HEK293 (cell line): ENCODE measurements at regions of chr9 and their contacts with region 1.

Region 1: DNA sequence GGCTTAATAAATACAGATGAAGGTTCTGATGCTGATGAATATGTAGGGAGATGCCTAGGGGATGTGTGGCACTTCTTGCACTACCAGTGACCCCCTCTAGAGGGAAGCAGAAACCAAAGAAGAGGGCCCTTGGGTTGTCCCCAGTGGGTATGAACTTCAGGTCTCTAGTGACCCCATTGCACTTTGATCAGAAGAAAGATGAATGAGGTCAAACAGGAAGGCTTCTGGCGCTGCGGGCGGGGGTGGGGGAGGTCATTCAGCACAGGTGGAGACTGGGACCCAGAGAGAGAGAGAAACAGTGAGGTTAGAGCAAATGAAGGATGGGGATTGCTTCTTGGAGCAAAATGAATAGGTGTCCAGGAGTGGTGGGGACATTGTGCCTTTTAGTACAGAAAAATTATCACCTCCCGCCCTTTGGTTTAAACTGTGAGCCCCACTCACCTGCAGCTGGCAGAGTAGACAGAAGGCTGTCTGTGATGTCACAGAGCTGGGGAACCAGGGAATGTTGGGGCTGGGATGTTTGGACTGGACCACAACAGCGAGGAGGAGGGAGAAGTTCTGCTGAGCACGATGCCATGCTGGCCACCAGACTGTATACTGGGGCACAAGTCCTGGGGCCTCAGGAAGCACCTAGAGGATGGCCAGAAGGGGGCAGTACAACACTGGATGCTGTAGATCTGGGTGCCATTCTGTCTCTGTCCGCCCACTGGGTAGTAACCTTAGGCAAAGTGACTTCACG is at the start of gene TEX48:
- H3K4me3 ChIP-seq: no peak within 1 kb of the TSS
- H3K27ac ChIP-seq: no peak within 1 kb of the TSS
- H3K4me1 ChIP-seq: peaks cover 3% of the 10 kb centered on the region
- CTCF ChIP-seq: no peak; the same call in 1 of the 2 replicates

Region 2: DNA sequence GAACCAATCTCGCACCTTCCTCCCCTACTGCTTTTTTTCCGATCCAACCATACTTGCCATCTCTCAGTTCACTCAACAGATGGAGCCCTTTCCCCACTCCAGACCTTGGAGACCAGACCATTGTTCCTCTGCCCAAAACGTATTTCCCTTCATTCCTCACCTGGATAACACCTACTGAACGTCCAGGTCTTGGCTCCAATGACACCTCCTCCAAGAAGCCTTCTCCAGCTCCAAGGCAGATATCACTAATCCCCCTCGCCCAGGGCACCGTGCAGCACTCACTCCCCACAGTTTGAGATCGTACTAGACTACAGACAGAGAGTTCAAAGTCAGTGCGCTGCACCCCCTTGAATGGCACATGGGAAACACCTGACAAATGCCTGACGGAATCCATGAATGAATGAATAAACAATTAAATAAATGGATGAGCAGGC is 246.9 kb before region 1 on chr9:
- CTCF ChIA-PET with region 1: interaction called, 10 read pairs
- POLR2A ChIA-PET with region 1: no interaction called
- H3K4me3 ChIP-seq: no peak overlapping the region
- H3K27ac ChIP-seq: no peak overlapping the region
- H3K4me1 ChIP-seq: no peaks in the 10 kb centered on the region
- CTCF ChIP-seq: peak; percentile 86

Region 3: DNA sequence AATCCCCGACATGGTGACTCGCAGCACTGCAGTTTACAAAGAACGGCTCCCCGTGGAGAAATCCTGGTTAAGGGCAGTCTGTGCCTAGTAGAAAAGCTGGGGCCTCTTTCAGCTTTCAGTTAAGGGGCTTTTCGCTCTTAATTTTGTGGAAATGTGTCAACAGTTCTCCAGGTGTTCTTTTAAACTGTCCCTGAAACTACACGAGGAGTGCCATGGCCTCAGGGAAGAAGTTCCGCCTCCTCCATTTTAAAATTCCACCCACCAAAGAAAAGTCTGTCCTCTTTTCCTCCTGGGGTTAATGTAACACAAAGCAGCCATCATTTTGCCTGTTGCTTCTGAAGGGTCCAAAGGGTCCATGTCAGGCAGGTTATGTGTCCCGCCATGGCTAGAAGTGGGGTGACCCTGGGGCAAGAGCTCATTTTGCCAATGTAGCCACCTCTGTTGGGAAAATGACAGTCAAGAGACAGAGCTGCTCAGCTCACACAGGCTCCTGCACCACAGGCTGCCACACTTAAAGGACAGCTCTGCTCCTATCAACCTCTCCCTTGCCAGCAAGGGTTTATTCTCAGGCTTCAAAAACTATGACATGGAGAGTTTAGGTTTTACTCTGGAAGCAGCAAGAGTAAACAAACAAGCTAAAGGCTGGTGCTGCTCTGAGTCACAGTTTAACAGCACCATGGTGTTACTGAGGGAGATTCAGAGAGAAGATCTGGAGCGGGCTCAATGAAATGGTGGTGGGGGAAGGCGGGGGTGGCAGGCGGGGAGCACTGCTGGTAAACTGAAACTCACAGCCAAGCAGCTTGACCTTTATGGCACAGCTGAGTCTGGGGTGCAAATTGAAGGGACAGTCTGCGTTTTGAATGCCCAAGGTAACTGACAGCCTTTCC is 179.7 kb before region 1 on chr9:
- CTCF ChIA-PET with region 1: no interaction called
- POLR2A ChIA-PET with region 1: no interaction called
- H3K4me3 ChIP-seq: no peak overlapping the region; the same call in 1 of the 2 replicates
- H3K27ac ChIP-seq: peak overlapping the region; percentile 74
- H3K4me1 ChIP-seq: peaks cover 10% of the 10 kb centered on the region
- CTCF ChIP-seq: no peak

Region 4: DNA sequence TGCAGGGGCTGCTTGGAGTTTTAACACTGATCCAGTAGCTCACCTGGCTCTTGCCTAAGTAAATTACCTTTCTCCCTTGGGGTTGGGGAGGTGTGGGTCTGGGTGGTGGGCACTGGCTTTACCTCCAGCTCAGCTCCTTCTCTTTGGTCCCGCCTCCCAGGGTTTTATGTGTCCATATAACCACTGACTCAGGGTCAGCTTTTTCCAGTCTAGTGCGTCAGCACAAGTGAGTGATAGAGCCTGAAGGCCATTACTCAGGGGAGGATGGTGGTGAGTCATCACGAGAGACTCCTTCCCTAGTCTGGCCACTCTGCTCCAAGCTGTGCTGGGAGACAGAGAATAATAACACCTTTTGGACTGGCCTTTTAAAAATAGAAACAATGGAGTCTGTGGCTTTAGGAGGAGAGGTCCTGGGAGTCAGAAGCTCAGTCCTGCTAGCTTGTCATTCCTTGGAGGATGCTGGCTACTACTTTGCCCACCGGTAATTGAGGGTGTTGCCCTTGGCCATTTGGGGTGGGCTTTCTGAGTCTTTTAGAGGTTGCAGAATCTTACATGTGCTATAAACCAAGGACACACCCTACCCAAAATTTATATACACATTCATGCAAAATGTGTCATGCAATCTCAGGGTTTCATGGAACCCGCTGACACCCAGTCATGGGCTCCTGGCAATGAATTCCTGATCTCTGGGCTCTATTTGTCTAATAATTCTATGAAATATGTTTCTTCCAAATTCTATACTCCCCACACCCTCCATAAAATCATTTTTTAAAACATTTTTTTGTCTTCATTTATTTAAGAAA is 129.7 kb before region 1 on chr9:
- CTCF ChIA-PET with region 1: no interaction called
- POLR2A ChIA-PET with region 1: no interaction called
- H3K4me3 ChIP-seq: no peak overlapping the region
- H3K27ac ChIP-seq: no peak overlapping the region
- H3K4me1 ChIP-seq: no peaks in the 10 kb centered on the region
- CTCF ChIP-seq: no peak

Region 5: GRCh38 chr9:114706711-114707110 is 24.9 kb after region 1 on chr9:
- CTCF ChIA-PET with region 1: interaction called, 16 read pairs
- POLR2A ChIA-PET with region 1: no interaction called
- H3K4me3 ChIP-seq: no peak overlapping the region
- H3K27ac ChIP-seq: no peak overlapping the region
- H3K4me1 ChIP-seq: no peaks in the 10 kb centered on the region
- CTCF ChIP-seq: no peak

Region 6: GRCh38 chr9:114738581-114739316 is 57.0 kb after region 1 on chr9:
- CTCF ChIA-PET with region 1: interaction called, 83 read pairs
- POLR2A ChIA-PET with region 1: interaction called, 3 read pairs
- H3K4me3 ChIP-seq: no peak overlapping the region
- H3K27ac ChIP-seq: no peak overlapping the region
- H3K4me1 ChIP-seq: no peaks in the 10 kb centered on the region; the same call in 1 of the 2 replicates
- CTCF ChIP-seq: peak; percentile 40; the same call in 1 of the 2 replicates

Region 7: GRCh38 chr9:114906908-114907571 is 225.3 kb after region 1 on chr9:
- CTCF ChIA-PET with region 1: interaction called, 296 read pairs
- POLR2A ChIA-PET with region 1: interaction called, 5 read pairs
- H3K4me3 ChIP-seq: no peak overlapping the region
- H3K27ac ChIP-seq: peak overlapping the region; percentile 9; the same call in 1 of the 2 replicates
- H3K4me1 ChIP-seq: peaks cover 9% of the 10 kb centered on the region
- CTCF ChIP-seq: peak; percentile 49

Region 8: DNA sequence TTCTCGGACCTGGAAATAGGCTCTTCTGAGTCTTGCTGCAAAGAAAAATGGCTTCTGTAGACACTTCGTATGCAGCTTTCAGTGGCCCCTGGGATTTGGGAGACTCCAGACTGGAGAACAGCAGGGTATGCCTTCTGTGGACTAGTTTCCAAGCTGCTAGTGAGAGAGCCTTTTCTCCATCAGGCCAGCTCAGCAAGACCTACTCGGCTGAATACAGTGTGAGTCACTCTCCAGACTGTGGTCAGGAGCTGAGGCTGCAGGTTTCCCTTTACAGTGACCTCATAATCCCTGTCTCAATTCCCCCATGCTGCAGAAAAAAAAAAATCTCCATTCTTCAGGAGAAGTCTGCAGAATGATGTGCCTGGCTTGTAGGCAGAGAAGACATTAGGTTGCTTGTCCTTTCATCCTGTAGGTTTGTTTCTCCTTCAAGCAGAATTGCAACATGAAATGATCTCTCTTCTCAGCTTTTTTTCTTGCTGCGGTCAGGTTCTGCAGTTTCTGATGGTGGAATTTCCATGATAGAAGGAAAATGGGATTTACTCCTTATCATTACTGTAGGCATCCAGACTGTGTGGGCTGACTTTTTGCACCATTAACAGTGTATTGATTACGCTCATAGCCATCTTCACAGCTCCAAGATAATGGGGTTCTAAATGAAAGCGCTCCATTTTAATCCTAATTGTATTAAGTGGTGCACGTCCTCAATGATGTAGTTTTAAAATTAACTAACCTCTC is 326.9 kb after region 1 on chr9:
- CTCF ChIA-PET with region 1: interaction called, 50 read pairs
- POLR2A ChIA-PET with region 1: no interaction called
- H3K4me3 ChIP-seq: no peak overlapping the region
- H3K27ac ChIP-seq: no peak overlapping the region
- H3K4me1 ChIP-seq: peaks cover 3% of the 10 kb centered on the region
- CTCF ChIP-seq: no peak

Region 9: GRCh38 chr9:115146581-115147021 is 464.8 kb after region 1 on chr9:
- CTCF ChIA-PET with region 1: no interaction called
- POLR2A ChIA-PET with region 1: no interaction called
- H3K4me3 ChIP-seq: no peak overlapping the region
- H3K27ac ChIP-seq: no peak overlapping the region
- H3K4me1 ChIP-seq: no peaks in the 10 kb centered on the region
- CTCF ChIP-seq: no peak

Region 10: DNA sequence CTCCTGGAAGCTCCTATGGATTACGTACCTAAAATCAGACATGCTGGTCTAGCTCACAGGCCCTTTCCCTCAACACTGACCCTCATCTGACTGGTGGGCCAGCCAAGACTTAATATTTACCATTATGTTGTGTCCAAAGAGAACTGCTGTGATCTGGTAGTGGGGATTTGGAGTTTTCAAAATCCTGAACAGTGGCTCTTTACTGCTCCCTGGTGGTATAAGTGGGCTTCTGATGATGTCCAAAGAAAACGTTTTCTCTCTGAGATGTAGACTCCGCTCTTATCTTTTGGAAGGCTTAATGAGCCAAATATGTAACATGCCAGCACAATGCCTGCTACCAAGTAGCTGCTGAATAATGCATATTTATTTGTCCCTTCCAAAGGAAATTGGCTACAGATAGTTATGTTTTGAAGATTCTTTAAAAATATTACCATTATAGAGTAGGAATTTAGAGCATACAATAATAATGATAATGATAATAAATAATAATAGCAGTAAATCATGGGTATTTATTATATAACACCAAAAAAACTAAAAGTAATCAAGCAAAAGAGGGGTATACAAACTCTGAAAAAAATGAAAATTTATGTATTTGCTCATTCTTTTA is 842.8 kb after region 1 on chr9:
- CTCF ChIA-PET with region 1: interaction called, 14 read pairs
- POLR2A ChIA-PET with region 1: no interaction called
- H3K4me3 ChIP-seq: no peak overlapping the region
- H3K27ac ChIP-seq: no peak overlapping the region
- H3K4me1 ChIP-seq: no peaks in the 10 kb centered on the region
- CTCF ChIP-seq: peak; percentile 57; the same call in 1 of the 2 replicates